AG04449 (cell line): ENCODE measurements at regions of chr14 and their contacts with region 1.

Region 1: GRCh38 chr14:99982537-99983250 is 82.5 kb upstream of the EVL start:
- DNase-seq: no peak
- H3K4me3 ChIP-seq: no peak overlapping the region
- CTCF ChIP-seq: peak; percentile 82

Region 2: DNA sequence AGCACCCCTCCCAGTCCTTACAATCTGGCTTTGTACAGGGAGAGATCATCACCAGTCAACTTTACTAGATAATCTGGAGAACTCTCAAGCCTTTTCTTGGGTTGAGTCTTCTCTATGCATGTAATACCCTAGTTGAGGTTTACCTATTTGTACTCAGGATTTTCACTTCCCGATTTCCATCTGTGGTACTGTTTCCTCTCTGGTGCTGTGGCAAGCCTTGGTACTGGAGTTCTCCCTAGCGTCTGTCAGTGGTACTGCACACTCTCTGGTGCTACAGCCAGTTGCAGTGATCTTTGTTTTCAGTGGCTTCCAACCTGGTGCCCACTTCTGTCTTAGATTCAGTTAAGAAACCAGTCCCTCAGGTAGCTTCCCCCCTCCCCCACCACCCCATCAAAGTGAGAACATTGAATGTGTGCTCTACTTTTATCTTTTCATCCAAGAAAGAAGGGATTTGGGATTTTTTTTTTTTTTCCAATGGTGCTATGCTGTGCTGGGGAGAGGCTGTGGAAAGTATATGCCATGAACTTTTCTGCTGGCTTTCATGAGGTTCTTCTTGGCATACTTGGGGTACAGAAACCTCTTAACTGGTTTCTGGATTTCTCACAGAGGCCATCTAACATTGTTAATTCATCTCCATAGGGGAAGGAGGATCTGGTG is 13.1 kb after region 1 on chr14:
- CTCF ChIA-PET with region 1: interaction called, 14 read pairs
- POLR2A ChIA-PET with region 1: no interaction called
- DNase-seq: no peak
- H3K4me3 ChIP-seq: no peak overlapping the region
- CTCF ChIP-seq: peak; percentile 62

Region 3: DNA sequence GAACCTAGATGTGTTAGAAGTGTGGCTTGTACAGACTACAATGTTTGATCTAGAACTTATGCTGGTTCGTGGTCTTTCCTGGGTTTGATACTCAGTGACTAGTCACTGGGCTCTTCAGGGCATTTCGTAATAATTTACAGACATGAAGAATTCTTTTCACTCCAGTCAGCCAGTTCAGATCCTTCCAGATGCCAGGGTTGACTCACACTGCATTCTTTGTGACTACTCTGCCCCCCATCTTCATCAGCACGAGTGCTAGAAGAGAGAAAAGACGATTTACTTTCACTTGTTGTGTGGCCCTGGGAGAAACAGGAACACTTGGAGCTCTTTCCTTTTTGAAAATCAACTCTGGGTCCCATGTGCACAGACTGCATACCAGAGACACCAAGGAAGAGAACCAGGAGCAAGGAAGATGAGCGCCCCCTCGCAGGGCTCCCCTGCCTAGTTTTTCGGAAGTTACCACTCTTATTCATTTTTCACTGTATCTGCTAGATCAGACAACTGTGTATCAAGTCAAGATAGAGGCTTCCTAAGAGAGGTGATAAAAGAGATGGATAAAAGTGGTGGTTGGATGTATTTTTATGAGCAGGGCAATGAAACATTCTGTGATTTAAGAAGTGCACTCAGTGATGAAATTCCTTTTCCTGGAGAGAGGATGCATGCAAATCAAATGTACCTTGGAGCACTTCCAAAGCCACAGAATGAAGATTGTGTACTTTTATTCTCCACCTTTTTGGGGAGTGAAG is 49.0 kb after region 1 on chr14:
- CTCF ChIA-PET with region 1: interaction called, 47 read pairs
- POLR2A ChIA-PET with region 1: no interaction called
- DNase-seq: peak; percentile 96
- H3K4me3 ChIP-seq: peak overlapping the region; percentile 57
- CTCF ChIP-seq: no peak

Region 4: GRCh38 chr14:100096570-100096971 is 113.9 kb after region 1 on chr14:
- CTCF ChIA-PET with region 1: interaction called, 11 read pairs
- POLR2A ChIA-PET with region 1: no interaction called
- DNase-seq: peak; percentile 45
- H3K4me3 ChIP-seq: no peak overlapping the region
- CTCF ChIP-seq: no peak